ENCODE measurements at regions of chr12 and their contacts with region 1.

Region 1: DNA sequence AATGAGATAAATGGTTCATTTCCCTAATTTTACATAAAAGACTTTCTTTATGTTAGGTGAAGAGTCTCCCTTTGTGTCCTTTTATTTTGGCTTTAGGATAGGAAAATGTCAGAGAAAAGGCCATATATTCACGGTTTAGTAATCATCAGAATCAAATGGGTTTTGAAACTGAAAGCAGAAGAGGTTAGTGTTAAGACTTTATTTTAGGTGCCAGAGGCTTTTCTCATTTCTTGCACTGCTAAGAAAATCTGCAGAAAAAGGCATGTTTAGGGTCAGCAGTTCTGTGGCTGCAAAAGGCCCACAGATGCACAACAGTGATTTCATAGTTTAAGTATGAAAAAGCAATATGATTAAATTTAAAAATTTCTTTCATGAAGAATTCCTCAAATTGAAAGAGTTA is 80.4 kb upstream of the SINHCAF start:
- DNase-seq: no peak
- H3K4me3 ChIP-seq: no peak overlapping the region
- H3K4me1 ChIP-seq: peaks cover 3% of the 10 kb centered on the region
- H3K27me3 ChIP-seq: no peaks in the 10 kb centered on the region

Region 2: DNA sequence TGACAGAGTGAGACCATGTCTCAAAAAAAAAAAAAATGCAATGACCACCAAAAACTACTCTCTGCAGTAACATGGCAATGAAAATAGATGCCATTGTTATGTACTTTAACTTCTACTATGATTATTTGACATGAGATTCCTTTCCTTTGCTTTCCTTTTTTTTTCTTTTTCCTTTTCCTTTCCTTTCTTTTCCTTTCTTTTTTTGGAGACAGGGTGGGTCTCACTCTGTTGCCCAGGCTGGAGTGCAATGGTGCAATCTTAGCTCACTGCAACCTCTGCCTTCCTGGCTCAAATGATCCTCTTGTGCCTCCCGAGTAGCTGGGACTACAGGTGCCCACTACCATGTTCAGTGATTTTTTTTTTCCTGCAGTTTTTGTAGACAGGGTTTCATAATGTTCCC is 228.3 kb after region 1 on chr12:
- in situ Hi-C with region 1: loop called (anchors 5 kb)
- DNase-seq: no peak
- H3K4me3 ChIP-seq: no peak overlapping the region
- H3K4me1 ChIP-seq: peaks cover 8% of the 10 kb centered on the region
- H3K27me3 ChIP-seq: no peaks in the 10 kb centered on the region

Region 3: GRCh38 chr12:32302218-32303173 is 896.2 kb after region 1 on chr12:
- in situ Hi-C with region 1: loop called (anchors 25 kb)
- DNase-seq: no peak
- H3K4me3 ChIP-seq: no peak overlapping the region
- H3K4me1 ChIP-seq: peaks cover 3% of the 10 kb centered on the region; the same call in 1 of the 2 replicates
- H3K27me3 ChIP-seq: no peaks in the 10 kb centered on the region